B cell (primary cell): ENCODE measurements at regions of chr12 and their contacts with region 1.

Region 1: DNA sequence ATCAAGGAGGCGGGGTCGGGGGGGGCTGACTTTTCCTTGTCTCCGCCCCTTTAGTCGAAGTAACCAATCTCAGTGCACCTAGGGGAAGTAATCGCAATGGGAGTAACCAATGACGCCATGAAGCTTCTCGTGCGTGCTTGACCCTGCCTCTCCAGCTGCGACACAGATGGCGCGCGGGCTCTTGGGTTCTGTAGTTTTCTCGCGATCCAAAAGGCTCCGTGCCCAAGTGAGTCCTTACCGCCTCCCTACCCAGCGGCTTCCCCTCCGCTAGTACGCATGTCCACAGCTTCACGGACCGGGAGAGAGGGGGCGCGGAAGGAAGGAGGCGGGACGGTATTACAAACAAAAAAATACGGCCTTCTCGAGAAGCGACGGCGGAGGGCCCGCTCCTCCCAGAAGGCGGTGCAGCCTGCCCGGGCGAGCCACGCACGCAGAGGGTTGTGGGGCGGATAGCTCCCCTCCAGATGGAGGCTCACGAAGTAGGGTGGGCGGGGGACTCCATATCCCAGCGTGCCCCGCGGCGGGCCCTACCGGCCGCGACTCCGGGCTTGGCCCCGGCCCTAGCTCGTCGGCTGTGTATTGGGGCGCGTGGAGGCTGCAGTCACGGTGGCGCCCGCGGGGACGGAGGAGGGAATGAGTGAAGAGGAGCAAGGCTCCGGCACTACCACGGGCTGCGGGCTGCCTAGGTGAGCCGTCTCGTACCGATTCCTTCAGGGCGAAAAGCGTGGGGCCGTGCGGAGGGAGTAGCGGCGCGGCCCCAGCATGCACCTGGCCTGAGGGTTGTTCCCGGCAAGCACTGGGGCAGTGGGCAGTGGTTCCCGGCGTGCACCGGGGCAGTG is at the start of gene TARBP2:
- DNase-seq: peak; percentile 99
- ATAC-seq: peak; percentile 79
- H3K4me3 ChIP-seq: peak within 1 kb of the TSS; percentile 65 to 94 (median 76)
- H3K4me3 Mint-ChIP-seq: peak within 1 kb of the TSS; percentile 92
- H3K27ac ChIP-seq: peak within 1 kb of the TSS; percentile 95 to 97
- H3K27ac Mint-ChIP-seq: peak within 1 kb of the TSS; percentile 97
- H3K4me1 ChIP-seq: peaks cover 22 to 28% of the 10 kb centered on the region in 2 donors
- H3K4me1 Mint-ChIP-seq: peaks cover 29% of the 10 kb centered on the region
- H3K27me3 ChIP-seq: no peaks in the 10 kb centered on the region
- H3K27me3 Mint-ChIP-seq: no peaks in the 10 kb centered on the region
- CTCF ChIP-seq: no peak
- total RNA-seq, gene TARBP2: 36.3 and 41.6 TPM in 2 replicates

Region 2: DNA sequence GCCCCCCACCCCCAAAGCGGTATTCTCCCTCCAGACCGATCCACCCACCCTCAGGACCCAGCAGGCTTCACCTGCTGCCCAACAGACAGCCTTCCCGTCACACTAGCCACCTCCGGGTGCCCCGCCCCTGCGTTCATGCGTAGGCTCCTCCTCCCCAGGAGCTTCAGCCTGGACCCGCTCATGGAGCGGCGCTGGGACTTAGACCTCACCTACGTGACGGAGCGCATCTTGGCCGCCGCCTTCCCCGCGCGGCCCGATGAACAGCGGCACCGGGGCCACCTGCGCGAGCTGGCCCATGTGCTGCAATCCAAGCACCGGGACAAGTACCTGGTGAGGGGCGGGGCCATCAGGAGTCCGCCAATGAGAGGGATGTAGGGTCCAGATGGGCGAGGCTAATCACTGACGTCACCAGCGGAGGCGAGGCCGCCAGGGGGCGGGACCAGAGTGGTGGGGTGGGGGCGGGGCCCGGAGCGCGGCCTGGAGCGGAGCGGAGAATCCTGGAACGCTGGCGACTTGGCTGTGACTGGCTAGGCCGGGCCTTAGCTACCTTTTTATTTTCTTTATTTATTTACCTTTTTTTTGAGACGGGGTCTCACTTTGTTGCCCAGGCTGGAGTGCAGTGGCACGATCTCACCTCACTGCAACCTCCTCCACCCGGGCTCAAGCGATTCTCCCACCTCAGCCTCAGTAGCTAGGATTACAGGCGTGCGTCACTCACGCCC is 446.7 kb before region 1 on chr12:
- CTCF ChIA-PET with region 1: no interaction called
- POLR2A ChIA-PET with region 1: no interaction called
- intact Hi-C with region 1: loop called (anchors 1 kb)
- DNase-seq: peak; percentile 97
- ATAC-seq: peak; percentile 97
- H3K4me3 ChIP-seq: peak overlapping the region; percentile 36 to 87 (median 75)
- H3K4me3 Mint-ChIP-seq: peak overlapping the region; percentile 98
- H3K27ac ChIP-seq: peak overlapping the region; percentile 52 to 65
- H3K27ac Mint-ChIP-seq: peak overlapping the region; percentile 91
- H3K4me1 ChIP-seq: peaks cover 6 to 15% of the 10 kb centered on the region in 2 donors
- H3K4me1 Mint-ChIP-seq: peaks cover 14% of the 10 kb centered on the region
- H3K27me3 ChIP-seq: peaks cover 0 to 7% (median 0%) of the 10 kb centered on the region in 4 experiments
- H3K27me3 Mint-ChIP-seq: no peaks in the 10 kb centered on the region
- CTCF ChIP-seq: no peak

Region 3: DNA sequence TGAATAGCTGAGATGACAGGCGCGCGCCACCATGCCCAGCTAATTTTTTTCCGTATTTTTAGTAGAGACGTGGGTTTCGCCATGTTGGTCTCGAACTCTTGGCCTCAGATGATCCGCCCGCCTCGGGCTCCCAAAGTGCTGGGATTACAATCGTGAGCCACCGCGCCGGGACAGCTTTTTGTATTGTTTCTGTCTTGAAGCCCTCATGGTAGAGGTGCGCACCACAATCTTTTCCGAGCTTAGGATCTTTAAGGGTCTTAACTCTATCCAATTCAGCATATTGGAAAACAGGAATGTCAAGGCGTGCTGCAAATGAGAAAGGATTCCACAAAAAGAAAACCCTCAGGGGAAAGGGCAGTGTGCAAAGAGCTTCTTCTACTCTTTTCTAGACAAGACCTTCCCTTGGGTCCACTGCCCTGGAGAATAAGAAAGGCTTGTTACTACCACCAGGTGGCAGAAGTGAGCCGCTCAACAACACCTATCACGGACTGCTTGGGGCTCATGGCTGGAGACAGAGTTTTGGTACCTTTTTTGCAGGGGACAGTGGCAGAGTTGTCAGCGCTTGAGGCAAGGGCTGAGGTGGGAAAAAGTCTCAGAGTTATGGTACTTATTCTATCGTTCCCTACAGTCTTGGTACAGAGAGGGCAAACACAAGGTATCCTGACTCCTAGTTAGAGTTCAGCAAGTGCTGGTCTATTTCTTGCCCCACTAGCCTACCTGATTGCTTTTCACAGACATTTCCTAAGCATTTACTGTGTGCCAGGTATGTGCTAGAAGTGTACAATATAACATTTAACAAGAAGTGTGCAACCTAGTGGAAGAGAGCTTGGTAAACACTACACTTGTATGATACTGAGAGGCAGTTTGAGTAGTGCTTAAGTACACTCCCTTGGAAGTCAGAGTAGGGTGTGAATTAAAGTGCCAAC is 148.4 kb before region 1 on chr12:
- CTCF ChIA-PET with region 1: interaction called, 10 read pairs
- POLR2A ChIA-PET with region 1: interaction called, 7 read pairs
- intact Hi-C with region 1: no loop called
- DNase-seq: peak; percentile 91
- ATAC-seq: peak; percentile 100
- H3K4me3 ChIP-seq: no peak overlapping the region
- H3K4me3 Mint-ChIP-seq: no peak overlapping the region
- H3K27ac ChIP-seq: no peak overlapping the region
- H3K27ac Mint-ChIP-seq: peak overlapping the region; percentile 61
- H3K4me1 ChIP-seq: peaks cover 4 to 5% of the 10 kb centered on the region in 2 donors
- H3K4me1 Mint-ChIP-seq: peaks cover 6% of the 10 kb centered on the region
- H3K27me3 ChIP-seq: no peaks in the 10 kb centered on the region
- H3K27me3 Mint-ChIP-seq: no peaks in the 10 kb centered on the region
- CTCF ChIP-seq: peak; percentile 87

Region 4: GRCh38 chr12:53414756-53415417 is 86.1 kb before region 1 on chr12:
- CTCF ChIA-PET with region 1: no interaction called
- POLR2A ChIA-PET with region 1: no interaction called
- intact Hi-C with region 1: loop called (anchors 2 kb)
- DNase-seq: no peak
- ATAC-seq: no peak
- H3K4me3 ChIP-seq: no peak overlapping the region
- H3K4me3 Mint-ChIP-seq: no peak overlapping the region
- H3K27ac ChIP-seq: no peak overlapping the region
- H3K27ac Mint-ChIP-seq: peak overlapping the region; percentile 46
- H3K4me1 ChIP-seq: peaks cover 24 to 29% of the 10 kb centered on the region in 2 donors
- H3K4me1 Mint-ChIP-seq: peaks cover 57% of the 10 kb centered on the region
- H3K27me3 ChIP-seq: no peaks in the 10 kb centered on the region
- H3K27me3 Mint-ChIP-seq: no peaks in the 10 kb centered on the region
- CTCF ChIP-seq: no peak

Region 5: GRCh38 chr12:53451661-53452158 is 49.3 kb before region 1 on chr12 and contains the start of gene PCBP2:
- CTCF ChIA-PET with region 1: no interaction called
- POLR2A ChIA-PET with region 1: interaction called, 5 read pairs
- intact Hi-C with region 1: loop called (anchors 1 kb)
- DNase-seq: peak; percentile 98
- ATAC-seq: peak; percentile 90
- H3K4me3 ChIP-seq: peak within 1 kb of the TSS; percentile 67 to 92 (median 85)
- H3K4me3 Mint-ChIP-seq: peak within 1 kb of the TSS; percentile 97
- H3K27ac ChIP-seq: peak within 1 kb of the TSS; percentile 90 to 94
- H3K27ac Mint-ChIP-seq: peak within 1 kb of the TSS; percentile 99
- H3K4me1 ChIP-seq: peaks cover 15 to 20% of the 10 kb centered on the region in 2 donors
- H3K4me1 Mint-ChIP-seq: peaks cover 27% of the 10 kb centered on the region
- H3K27me3 ChIP-seq: no peaks in the 10 kb centered on the region
- H3K27me3 Mint-ChIP-seq: no peaks in the 10 kb centered on the region
- CTCF ChIP-seq: peak; percentile 84
- total RNA-seq, gene PCBP2: 916 and 944 TPM in 2 replicates

Region 6: GRCh38 chr12:53727310-53728041 is 226.5 kb after region 1 on chr12 and contains the start of gene CALCOCO1:
- CTCF ChIA-PET with region 1: no interaction called
- POLR2A ChIA-PET with region 1: no interaction called
- intact Hi-C with region 1: loop called (anchors 1 kb)
- DNase-seq: peak; percentile 98
- ATAC-seq: peak; percentile 97
- H3K4me3 ChIP-seq: peak within 1 kb of the TSS; percentile 51 to 96 (median 85)
- H3K4me3 Mint-ChIP-seq: peak within 1 kb of the TSS; percentile 91
- H3K27ac ChIP-seq: peak within 1 kb of the TSS; percentile 60 to 61
- H3K27ac Mint-ChIP-seq: peak within 1 kb of the TSS; percentile 82
- H3K4me1 ChIP-seq: peaks cover 13 to 21% of the 10 kb centered on the region in 2 donors
- H3K4me1 Mint-ChIP-seq: peaks cover 22% of the 10 kb centered on the region
- H3K27me3 ChIP-seq: no peaks in the 10 kb centered on the region
- H3K27me3 Mint-ChIP-seq: peaks cover 11% of the 10 kb centered on the region
- CTCF ChIP-seq: no peak
- total RNA-seq, gene CALCOCO1: 171 and 179 TPM in 2 replicates